ENCODE measurements at regions of chr5 and their contacts with region 1.

Region 1: DNA sequence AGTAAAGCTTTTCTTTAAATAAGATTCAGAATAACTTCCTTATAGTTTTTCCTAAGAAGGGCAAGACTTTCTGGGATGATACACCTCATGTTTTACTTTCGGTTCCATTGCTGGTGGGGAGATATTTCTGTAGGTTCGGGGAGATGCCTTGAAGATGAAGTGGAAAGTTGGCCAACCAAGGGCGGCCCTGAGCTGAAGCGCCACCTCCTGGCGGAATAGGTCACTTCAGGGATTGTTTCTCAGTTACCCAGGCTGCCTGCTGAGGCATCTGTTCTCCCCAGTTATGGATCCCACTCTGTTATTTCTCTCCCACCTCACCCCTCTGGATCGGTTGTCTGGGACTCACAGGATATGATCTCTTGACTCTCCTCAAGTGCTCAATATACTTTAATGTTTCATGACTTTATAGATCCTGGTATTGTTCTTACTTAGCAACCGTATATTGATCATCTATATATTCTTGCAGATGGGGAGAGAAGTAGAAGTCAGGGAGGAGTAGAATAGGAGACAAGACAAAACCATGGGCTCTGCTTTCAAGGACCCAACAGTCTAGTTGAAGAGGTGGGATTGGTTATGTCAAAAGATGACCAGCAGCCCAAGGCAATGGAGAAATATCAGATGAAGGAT is 23.4 kb downstream of the MEGF10 start:
- DNase-seq: peak; percentile 69
- H3K4me3 ChIP-seq: no peak overlapping the region
- H3K27ac ChIP-seq: no peak overlapping the region
- H3K4me1 ChIP-seq: no peaks in the 10 kb centered on the region
- H3K27me3 ChIP-seq: peaks cover 26 to 47% of the 10 kb centered on the region in 2 experiments
- CTCF ChIP-seq: peak; percentile 78 to 85
- POLR2A ChIP-seq: no peak

Region 2: DNA sequence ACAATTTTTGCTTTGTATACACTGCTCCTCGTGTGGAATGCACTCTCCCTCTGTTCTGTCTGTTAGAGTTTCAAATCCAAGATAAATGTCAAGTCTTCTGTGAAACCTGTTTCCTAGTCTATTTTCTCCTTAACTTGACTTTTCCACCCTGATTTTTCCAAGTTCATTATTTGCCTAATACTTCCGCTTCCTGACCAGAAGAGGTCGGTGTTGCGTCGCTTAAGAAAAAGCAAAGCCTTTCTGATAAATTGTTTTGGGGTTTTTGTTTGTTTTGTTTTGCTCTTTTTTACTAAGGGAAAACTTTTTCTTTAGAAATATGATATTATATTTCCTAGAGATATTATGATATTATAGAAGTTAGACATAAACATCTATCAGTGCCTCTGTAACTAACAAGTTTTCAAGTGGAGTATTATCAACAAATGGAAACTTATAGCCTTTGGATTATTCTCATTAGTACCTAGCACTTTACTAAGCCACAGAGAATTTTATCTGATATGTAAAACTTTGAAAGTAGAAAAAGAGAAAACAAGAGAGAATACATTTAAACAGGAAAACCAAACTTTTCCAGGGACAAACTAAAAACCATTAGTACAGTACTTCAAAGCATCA is 657.5 kb before region 1 on chr5:
- CTCF ChIA-PET with region 1: no interaction called
- POLR2A ChIA-PET with region 1: no interaction called
- dilution Hi-C with region 1: no loop called
- intact Hi-C with region 1: loop called (anchors 1 kb)
- DNase-seq: peak; percentile 47
- H3K4me3 ChIP-seq: no peak overlapping the region
- H3K27ac ChIP-seq: no peak overlapping the region
- H3K4me1 ChIP-seq: no peaks in the 10 kb centered on the region
- H3K27me3 ChIP-seq: no peaks in the 10 kb centered on the region
- CTCF ChIP-seq: peak; percentile 61 to 62
- POLR2A ChIP-seq: no peak

Region 3: DNA sequence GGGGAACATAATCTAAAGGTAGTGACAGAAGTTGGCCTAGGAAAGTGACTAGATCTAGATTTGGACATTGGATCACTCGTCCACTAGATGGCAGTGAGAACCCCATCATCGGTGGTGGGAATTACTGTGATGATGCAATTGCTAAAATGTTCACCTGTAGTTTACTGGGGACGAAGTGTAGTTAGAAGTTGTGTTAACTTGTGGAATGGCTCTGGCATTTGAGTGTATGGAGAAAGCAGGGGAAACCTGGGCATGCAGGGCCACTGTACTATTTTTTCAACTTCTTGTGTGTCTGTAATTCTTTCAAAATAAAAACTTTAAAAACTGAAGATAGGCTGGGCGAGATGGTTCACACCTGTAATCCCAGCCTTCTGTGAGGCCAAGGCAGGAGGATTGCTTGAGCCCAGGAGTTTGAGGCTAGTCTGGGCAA is 637.8 kb before region 1 on chr5:
- CTCF ChIA-PET with region 1: interaction called, 4 read pairs
- POLR2A ChIA-PET with region 1: no interaction called
- dilution Hi-C with region 1: no loop called
- intact Hi-C with region 1: loop called (anchors 1 kb)
- DNase-seq: peak; percentile 56
- H3K4me3 ChIP-seq: no peak overlapping the region
- H3K27ac ChIP-seq: no peak overlapping the region
- H3K4me1 ChIP-seq: no peaks in the 10 kb centered on the region
- H3K27me3 ChIP-seq: peaks cover 3 to 7% of the 10 kb centered on the region in 2 experiments
- CTCF ChIP-seq: peak; percentile 72 to 75
- POLR2A ChIP-seq: no peak

Region 4: DNA sequence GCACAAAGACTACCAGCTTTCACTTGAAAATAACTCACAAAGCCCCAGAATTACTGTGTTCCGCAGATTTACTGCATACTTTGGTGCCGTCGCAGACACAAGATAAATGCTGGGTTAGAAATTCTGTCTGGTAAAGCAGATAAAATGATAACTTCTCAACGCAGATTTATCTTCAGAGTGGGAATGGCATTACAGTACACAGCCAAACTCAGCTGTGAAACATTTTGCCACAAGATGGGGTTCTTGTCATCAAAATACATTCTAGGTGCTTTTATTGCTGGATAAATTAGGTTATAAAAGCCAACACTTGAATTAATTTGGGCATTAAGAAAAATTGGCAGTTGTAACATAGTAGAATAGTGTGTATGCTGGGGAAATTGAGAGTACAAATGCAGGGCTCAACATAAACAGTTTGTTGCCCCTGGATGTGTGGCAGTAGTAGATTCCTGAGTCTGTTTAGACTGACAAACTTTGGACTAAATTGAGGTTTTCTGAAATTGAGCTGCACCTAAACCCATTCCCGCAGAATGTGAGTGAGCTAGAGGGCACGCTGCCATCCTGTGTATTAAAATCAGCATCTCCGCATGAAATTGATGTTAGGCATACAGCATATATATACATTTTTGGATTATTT is 475.9 kb before region 1 on chr5:
- CTCF ChIA-PET with region 1: interaction called, 45 read pairs
- POLR2A ChIA-PET with region 1: no interaction called
- dilution Hi-C with region 1: no loop called
- intact Hi-C with region 1: loop called (anchors 1 kb)
- DNase-seq: peak; percentile 54
- H3K4me3 ChIP-seq: no peak overlapping the region
- H3K27ac ChIP-seq: no peak overlapping the region
- H3K4me1 ChIP-seq: no peaks in the 10 kb centered on the region
- H3K27me3 ChIP-seq: no peaks in the 10 kb centered on the region
- CTCF ChIP-seq: peak; percentile 8 to 34
- POLR2A ChIP-seq: no peak

Region 5: GRCh38 chr5:127290019-127290945 is 23.7 kb before region 1 on chr5 and contains the start of gene MEGF10:
- CTCF ChIA-PET with region 1: interaction called, 9 read pairs
- POLR2A ChIA-PET with region 1: no interaction called
- dilution Hi-C with region 1: no loop called
- intact Hi-C with region 1: loop called (anchors 1 kb)
- DNase-seq: peak; percentile 33
- H3K4me3 ChIP-seq: peak within 1 kb of the TSS; percentile 8 to 46 (median 28)
- H3K27ac ChIP-seq: no peak within 1 kb of the TSS
- H3K4me1 ChIP-seq: peaks cover 17% of the 10 kb centered on the region
- H3K27me3 ChIP-seq: peaks cover 26 to 47% of the 10 kb centered on the region in 2 experiments
- CTCF ChIP-seq: peak; percentile 66 to 71
- POLR2A ChIP-seq: no peak
- total RNA-seq, gene MEGF10: 0.21 and 1.00 TPM in 2 replicates

Region 6: DNA sequence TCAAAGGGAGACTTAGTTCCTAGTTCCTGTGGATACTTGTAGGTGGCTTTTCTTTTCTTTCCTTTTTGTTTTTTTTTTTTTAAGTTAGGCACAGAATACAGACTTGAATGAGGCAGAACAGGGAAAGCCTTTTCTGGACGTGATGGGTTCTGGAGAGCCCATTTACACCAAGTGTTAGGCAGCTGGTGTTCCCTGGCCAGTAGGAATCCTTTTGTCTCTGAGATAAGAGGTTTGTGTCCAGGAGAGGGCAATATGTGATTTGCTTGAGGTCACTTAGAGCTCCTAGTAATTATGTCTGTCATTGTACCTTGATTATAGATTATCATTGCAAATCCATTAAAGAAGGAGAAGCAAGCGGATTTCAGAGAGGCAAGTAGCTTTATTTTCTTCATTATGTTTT is 14.3 kb before region 1 on chr5:
- CTCF ChIA-PET with region 1: interaction called, 10 read pairs
- POLR2A ChIA-PET with region 1: no interaction called
- dilution Hi-C with region 1: no loop called
- intact Hi-C with region 1: no loop called
- DNase-seq: no peak
- H3K4me3 ChIP-seq: no peak overlapping the region
- H3K27ac ChIP-seq: no peak overlapping the region
- H3K4me1 ChIP-seq: peaks cover 18% of the 10 kb centered on the region
- H3K27me3 ChIP-seq: peaks cover 11 to 15% of the 10 kb centered on the region in 2 experiments
- CTCF ChIP-seq: no peak
- POLR2A ChIP-seq: no peak

Measured in endothelial cell of umbilical vein (primary cell).